ENCODE measurements at regions of chr16 and their contacts with region 1.

Region 1: DNA sequence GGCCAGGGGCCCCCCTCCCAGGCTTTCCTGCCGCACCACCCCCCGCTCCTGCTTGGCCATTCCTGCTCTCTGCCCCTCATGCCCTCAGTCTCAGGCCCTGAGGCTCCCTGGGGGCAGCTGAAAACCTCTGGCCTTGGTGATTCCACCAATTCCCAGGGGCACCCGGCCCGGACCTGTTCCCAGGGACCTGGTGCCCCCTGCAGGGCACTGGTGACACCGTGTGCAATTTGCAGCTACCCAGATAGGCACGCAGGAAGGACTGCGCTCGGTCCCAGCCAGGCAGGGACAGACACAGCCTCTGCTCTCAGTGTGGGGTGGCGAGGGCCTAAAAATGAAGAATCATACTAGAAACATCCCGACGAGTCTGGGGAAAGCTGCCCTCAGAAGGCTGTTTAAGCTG is 13.4 kb downstream of the WFDC1 start:
- DNase-seq: no peak
- H3K4me3 ChIP-seq: no peak overlapping the region
- H3K27me3 ChIP-seq: peaks cover under 1% of the 10 kb centered on the region; the same call in 1 of the 2 replicates
- CTCF ChIP-seq: peak; percentile 75

Region 2: GRCh38 chr16:84268291-84269040 is 39.7 kb before region 1 on chr16:
- CTCF ChIA-PET with region 1: interaction called, 14 read pairs
- POLR2A ChIA-PET with region 1: no interaction called
- DNase-seq: no peak
- H3K4me3 ChIP-seq: no peak overlapping the region
- H3K27me3 ChIP-seq: peaks cover 5% of the 10 kb centered on the region
- CTCF ChIP-seq: no peak

Region 3: GRCh38 chr16:84284154-84284722 is 23.9 kb before region 1 on chr16:
- CTCF ChIA-PET with region 1: interaction called, 134 read pairs
- POLR2A ChIA-PET with region 1: no interaction called
- DNase-seq: no peak
- H3K4me3 ChIP-seq: no peak overlapping the region
- H3K27me3 ChIP-seq: no peaks in the 10 kb centered on the region
- CTCF ChIP-seq: no peak

Region 4: GRCh38 chr16:84391151-84392030 is 83.3 kb after region 1 on chr16:
- CTCF ChIA-PET with region 1: no interaction called
- POLR2A ChIA-PET with region 1: no interaction called
- DNase-seq: no peak
- H3K4me3 ChIP-seq: no peak overlapping the region
- H3K27me3 ChIP-seq: peaks cover 2% of the 10 kb centered on the region; the same call in 1 of the 2 replicates
- CTCF ChIP-seq: no peak

Measured in BJ (cell line).